Activated B cell treated with CpG ODN at 0.5 μM for 24 hours (primary cell): ENCODE measurements at regions of chr17 and their contacts with region 1.

Region 1: GRCh38 chr17:75779231-75779986 is 5.2 kb upstream of the UNK start:
- DNase-seq: peak; percentile 87
- ATAC-seq: peak; percentile 64
- H3K4me3 Mint-ChIP-seq: peak overlapping the region; percentile 89
- H3K27ac Mint-ChIP-seq: peak overlapping the region; percentile 94
- H3K4me1 Mint-ChIP-seq: peaks cover 60% of the 10 kb centered on the region
- H3K27me3 Mint-ChIP-seq: no peaks in the 10 kb centered on the region
- CTCF ChIP-seq: no peak

Region 2: GRCh38 chr17:75667021-75667790 is 112.2 kb before region 1 on chr17 and contains the starts of genes RECQL5 and SAP30BP:
- CTCF ChIA-PET with region 1: no interaction called
- POLR2A ChIA-PET with region 1: interaction called, 14 read pairs
- intact Hi-C with region 1: loop called (anchors 1 kb)
- DNase-seq: peak; percentile 95
- ATAC-seq: peak; percentile 74
- H3K4me3 Mint-ChIP-seq: peak within 1 kb of the TSS; percentile 55
- H3K27ac Mint-ChIP-seq: peak within 1 kb of the TSS; percentile 27
- H3K4me1 Mint-ChIP-seq: peaks cover 47% of the 10 kb centered on the region
- H3K27me3 Mint-ChIP-seq: no peaks in the 10 kb centered on the region
- CTCF ChIP-seq: no peak
- total RNA-seq, gene RECQL5: 55.9 and 65.4 TPM in 2 replicates
- total RNA-seq, gene SAP30BP: 177 and 184 TPM in 2 replicates

Region 3: DNA sequence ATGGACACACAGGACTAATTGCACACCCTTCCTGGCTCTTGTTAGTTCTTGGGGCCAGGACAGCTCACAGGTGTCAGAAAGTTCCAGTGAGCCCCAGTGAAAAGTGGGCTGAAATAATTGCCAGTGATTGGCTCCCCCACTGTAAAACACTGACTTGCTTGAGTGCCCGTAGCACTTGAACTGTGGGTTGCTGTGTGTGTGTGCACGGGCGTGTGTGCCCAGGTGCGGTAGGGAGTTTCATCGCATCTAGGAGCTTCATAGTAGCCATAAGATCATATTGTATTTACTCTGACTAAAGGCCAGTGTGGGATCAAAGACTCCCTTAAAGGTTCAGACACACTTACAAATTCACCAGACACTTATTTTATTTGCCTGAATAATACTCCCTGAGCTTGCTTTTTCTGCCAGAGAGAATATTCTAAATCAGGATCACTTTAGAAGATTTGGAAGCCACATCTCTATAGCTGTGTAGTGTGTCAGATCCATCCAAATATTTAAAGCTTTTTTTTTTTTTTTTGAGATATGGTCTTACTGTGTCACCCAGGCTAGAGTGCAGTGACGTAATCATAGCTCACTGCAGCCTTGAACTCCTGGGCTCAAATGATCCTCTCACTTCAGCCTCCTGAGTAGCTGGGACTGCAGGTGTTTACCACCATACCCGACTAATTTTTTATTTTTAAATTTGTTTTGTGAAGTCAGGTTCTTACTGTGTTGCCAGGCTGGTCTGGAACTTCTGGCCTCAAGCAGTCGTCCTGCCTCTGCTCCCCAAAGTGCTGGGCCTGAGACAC is 16.6 kb after region 1 on chr17:
- CTCF ChIA-PET with region 1: interaction called, 3 read pairs
- POLR2A ChIA-PET with region 1: interaction called, 12 read pairs
- intact Hi-C with region 1: no loop called
- DNase-seq: peak; percentile 3
- ATAC-seq: no peak
- H3K4me3 Mint-ChIP-seq: no peak overlapping the region
- H3K27ac Mint-ChIP-seq: no peak overlapping the region
- H3K4me1 Mint-ChIP-seq: peaks cover 11% of the 10 kb centered on the region
- H3K27me3 Mint-ChIP-seq: no peaks in the 10 kb centered on the region
- CTCF ChIP-seq: no peak

Region 4: DNA sequence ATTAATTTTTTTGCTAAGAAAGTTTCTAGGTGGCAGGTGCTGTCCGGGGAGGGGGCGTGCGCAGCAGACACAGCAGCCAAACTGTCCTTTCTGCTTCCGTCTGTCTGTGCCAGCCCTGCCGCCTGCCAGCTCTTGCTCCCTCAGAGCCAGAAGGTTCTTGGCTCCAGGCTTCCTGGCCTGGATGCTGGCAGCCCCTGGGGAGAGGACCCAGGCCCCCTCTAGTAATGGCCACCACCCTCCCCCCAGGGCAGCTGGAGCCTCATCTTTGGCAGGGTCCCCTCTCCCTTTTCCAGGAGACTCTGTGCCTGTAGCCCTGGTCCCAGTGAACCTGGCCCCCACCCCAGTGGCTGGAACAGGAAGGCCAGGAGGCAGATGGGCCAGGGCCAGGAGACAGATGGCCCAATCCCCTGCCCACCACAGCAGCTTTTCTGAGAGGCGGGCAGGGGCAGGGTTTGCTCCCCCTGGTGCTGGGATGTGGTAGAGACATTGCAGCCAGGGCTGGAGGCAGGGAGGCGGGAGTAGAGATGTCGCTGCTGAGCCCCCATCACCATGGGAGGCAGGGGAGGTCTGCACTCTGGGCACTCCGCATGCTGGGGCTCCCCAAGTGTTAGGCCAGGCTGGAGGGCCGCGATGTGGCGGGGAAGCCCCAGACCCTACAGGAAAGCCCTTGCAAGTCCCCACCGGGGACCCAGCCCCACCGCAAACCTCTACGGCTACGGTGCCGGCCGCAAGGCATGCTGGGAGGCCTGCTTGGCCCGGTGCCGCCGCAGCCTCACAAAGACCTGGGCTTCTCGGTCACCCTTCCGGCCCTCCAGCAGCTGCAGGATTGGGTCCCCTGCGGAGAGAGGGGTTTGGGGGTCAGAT is 48.1 kb after region 1 on chr17:
- CTCF ChIA-PET with region 1: interaction called, 7 read pairs
- POLR2A ChIA-PET with region 1: interaction called, 90 read pairs
- intact Hi-C with region 1: loop called (anchors 1 kb)
- DNase-seq: peak; percentile 64
- ATAC-seq: peak; percentile 85
- H3K4me3 Mint-ChIP-seq: peak overlapping the region; percentile 64
- H3K27ac Mint-ChIP-seq: peak overlapping the region; percentile 79
- H3K4me1 Mint-ChIP-seq: peaks cover 16% of the 10 kb centered on the region
- H3K27me3 Mint-ChIP-seq: no peaks in the 10 kb centered on the region
- CTCF ChIP-seq: no peak

Region 5: DNA sequence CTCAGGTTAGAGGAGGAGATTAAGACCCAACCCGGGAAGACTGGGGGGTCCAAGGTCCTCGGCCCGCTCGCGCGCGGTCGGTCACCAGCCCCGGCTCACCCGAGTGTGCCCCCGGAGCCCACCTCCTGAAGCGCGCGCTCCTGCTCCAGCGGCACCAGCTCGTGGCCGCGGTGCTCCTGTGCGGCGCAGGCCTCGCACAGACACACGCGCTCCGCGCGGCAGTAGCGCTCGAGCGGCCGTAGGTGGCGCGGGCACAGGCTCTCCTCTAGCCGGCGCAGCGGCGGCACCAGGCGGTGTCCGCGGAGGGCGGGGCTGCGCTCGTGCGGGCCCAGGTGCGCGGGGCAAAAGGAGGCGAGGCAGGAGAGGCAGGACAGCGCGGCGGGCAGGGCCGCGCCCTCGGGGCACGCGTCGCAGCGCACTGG is 98.4 kb after region 1 on chr17:
- CTCF ChIA-PET with region 1: no interaction called
- POLR2A ChIA-PET with region 1: interaction called, 44 read pairs
- intact Hi-C with region 1: no loop called
- DNase-seq: peak; percentile 73
- ATAC-seq: peak; percentile 83
- H3K4me3 Mint-ChIP-seq: peak overlapping the region; percentile 82
- H3K27ac Mint-ChIP-seq: peak overlapping the region; percentile 79
- H3K4me1 Mint-ChIP-seq: peaks cover 28% of the 10 kb centered on the region
- H3K27me3 Mint-ChIP-seq: peaks cover 8% of the 10 kb centered on the region
- CTCF ChIP-seq: no peak

Region 6: DNA sequence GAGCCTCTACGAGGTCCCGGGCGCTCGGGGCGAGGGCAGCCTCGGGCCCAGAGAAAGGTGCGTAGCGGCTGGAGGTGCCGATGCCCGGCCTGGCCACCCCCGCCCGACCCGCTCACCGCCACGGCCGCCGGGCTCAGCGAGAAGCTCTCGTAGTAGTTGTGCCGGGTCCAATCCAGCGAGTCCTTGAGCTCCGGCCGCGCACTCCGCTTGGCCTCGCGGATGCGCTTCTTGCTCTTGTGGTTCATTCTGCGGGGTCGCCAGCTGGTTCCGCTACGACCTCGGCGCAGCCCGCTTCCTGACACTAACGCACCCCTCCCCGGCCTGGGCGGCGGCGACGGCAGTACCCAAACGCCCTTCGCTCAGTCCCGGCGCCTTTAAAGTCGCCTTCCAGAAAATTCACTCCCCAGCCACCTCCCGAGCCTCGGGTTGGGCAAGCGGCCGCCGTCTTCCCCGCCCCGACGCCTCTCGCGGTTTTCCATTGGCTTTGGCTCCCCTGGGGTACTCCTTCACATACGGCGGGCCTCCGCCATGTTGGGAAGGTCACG is 946.9 kb after region 1 on chr17 and contains the start of gene JMJD6:
- CTCF ChIA-PET with region 1: no interaction called
- POLR2A ChIA-PET with region 1: no interaction called
- intact Hi-C with region 1: loop called (anchors 5 kb)
- DNase-seq: peak; percentile 83
- ATAC-seq: peak; percentile 75
- H3K4me3 Mint-ChIP-seq: peak within 1 kb of the TSS; percentile 96
- H3K27ac Mint-ChIP-seq: peak within 1 kb of the TSS; percentile 95
- H3K4me1 Mint-ChIP-seq: peaks cover 48% of the 10 kb centered on the region
- H3K27me3 Mint-ChIP-seq: no peaks in the 10 kb centered on the region
- CTCF ChIP-seq: no peak
- total RNA-seq, gene JMJD6: 32.7 and 33.1 TPM in 2 replicates